Sigmoid colon (tissue), 7 donors: ENCODE measurements at regions of chr14 and their contacts with region 1.

Region 1: DNA sequence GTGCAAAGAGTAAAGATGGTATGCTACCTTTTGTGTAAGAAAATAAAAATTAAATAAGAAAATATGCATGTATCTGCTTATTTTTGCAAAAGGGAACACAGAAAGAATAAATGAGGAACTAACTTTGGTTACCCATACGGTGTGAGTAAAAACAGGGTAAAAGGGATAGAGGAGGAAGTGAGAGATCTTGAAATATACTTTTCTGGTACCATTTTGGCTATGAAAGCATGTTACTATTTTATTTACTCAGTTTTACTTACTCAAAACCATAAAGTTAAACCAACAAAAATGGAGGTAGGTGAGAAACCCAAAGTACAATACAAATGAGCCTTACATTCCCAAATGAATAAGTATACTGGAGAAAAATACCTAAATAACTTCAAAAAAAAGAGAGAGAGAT is 122.0 kb upstream of the EGLN3 start:
- DNase-seq: no peak
- H3K4me3 ChIP-seq: no peak overlapping the region
- H3K27ac ChIP-seq: no peak overlapping the region
- H3K4me1 ChIP-seq: peaks cover 0 to 6% (median 2%) of the 10 kb centered on the region in 4 donors
- H3K27me3 ChIP-seq: no peaks in the 10 kb centered on the region
- CTCF ChIP-seq: no peak
- EP300 ChIP-seq: no peak
- POLR2A ChIP-seq: no peak

Region 2: GRCh38 chr14:33444136-33444535 is 628.8 kb before region 1 on chr14:
- intact Hi-C with region 1: no loop called
- DNase-seq: no peak
- H3K4me3 ChIP-seq: no peak overlapping the region
- H3K27ac ChIP-seq: no peak overlapping the region
- H3K4me1 ChIP-seq: peaks cover 0 to 8% (median 6%) of the 10 kb centered on the region in 4 donors
- H3K27me3 ChIP-seq: no peaks in the 10 kb centered on the region
- CTCF ChIP-seq: no peak
- EP300 ChIP-seq: no peak
- POLR2A ChIP-seq: no peak

Region 3: GRCh38 chr14:34124585-34124984 is 51.7 kb after region 1 on chr14:
- intact Hi-C with region 1: loop called (anchors 2 kb)
- DNase-seq: no peak
- H3K4me3 ChIP-seq: no peak overlapping the region
- H3K27ac ChIP-seq: no peak overlapping the region
- H3K4me1 ChIP-seq: peaks cover 0 to 8% (median 4%) of the 10 kb centered on the region in 4 donors
- H3K27me3 ChIP-seq: no peaks in the 10 kb centered on the region
- CTCF ChIP-seq: no peak
- EP300 ChIP-seq: no peak
- POLR2A ChIP-seq: no peak